ENCODE measurements at regions of chr17 and their contacts with region 1.

Region 1: GRCh38 chr17:47850692-47851573 is at the start of gene SP6:
- DNase-seq: peak; percentile 87
- H3K4me3 Mint-ChIP-seq: peak within 1 kb of the TSS; percentile 82
- H3K27ac Mint-ChIP-seq: peak within 1 kb of the TSS; percentile 78
- H3K4me1 Mint-ChIP-seq: peaks cover 15% of the 10 kb centered on the region
- H3K27me3 Mint-ChIP-seq: peaks cover 42% of the 10 kb centered on the region
- CTCF ChIP-seq: peak; percentile 15
- total RNA-seq, gene SP6: 1.2 and 1.5 TPM in 2 replicates

Region 2: GRCh38 chr17:47633996-47634395 is 216.9 kb before region 1 on chr17:
- CTCF ChIA-PET with region 1: no interaction called
- POLR2A ChIA-PET with region 1: no interaction called
- intact Hi-C with region 1: no loop called
- DNase-seq: no peak
- H3K4me3 Mint-ChIP-seq: no peak overlapping the region
- H3K27ac Mint-ChIP-seq: no peak overlapping the region
- H3K4me1 Mint-ChIP-seq: no peaks in the 10 kb centered on the region
- H3K27me3 Mint-ChIP-seq: no peaks in the 10 kb centered on the region
- CTCF ChIP-seq: no peak

Region 3: GRCh38 chr17:47831003-47831933 is 19.7 kb before region 1 on chr17 and contains the starts of genes LRRC46 and MRPL10:
- CTCF ChIA-PET with region 1: interaction called, 3 read pairs
- POLR2A ChIA-PET with region 1: interaction called, 12 read pairs
- intact Hi-C with region 1: no loop called
- DNase-seq: peak; percentile 90
- H3K4me3 Mint-ChIP-seq: peak within 1 kb of the TSS; percentile 83
- H3K27ac Mint-ChIP-seq: peak within 1 kb of the TSS; percentile 47
- H3K4me1 Mint-ChIP-seq: peaks cover 10% of the 10 kb centered on the region
- H3K27me3 Mint-ChIP-seq: no peaks in the 10 kb centered on the region
- CTCF ChIP-seq: peak; percentile 40
- total RNA-seq, gene LRRC46: 1.2 and 1.4 TPM in 2 replicates
- total RNA-seq, gene MRPL10: 43.2 and 49.3 TPM in 2 replicates

Region 4: DNA sequence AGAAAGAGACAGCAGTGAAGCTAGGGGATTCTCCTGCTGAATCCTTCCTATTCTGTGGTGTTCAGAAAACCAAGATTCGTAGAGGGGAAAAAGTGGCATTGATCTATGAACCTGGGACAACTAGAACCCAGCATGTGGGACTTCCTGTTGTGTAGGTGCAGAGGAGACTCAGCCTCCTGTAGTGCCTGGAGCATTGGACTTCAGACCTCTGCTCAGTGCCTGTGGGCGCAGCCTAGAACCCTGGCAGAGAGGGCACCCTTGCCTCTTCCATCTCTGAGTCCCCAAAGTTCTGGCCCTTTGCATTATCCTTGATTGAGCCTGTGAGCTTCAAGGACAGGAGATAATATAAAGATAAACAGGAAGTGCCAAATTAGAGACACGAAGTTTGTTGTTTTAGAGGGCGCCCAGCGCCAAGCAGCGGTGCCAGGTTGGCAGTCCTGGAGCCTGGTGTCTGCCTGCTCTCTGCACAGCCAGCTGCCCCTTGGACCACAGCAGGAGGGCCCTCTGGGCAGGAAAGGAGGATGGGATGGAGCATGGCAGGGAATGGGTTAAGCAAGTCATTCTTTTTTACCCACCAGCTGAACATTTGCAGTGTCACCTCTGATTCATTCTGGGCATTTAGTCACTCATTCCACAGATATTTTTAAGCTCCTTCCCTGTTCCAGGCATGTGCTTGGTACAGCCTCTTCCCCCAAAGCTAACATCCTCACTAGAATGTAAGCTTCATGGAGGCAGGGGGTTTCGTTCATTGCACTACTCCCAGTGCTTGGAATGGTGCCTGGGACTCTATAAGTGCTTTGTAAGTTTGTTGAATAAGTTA is 11.9 kb after region 1 on chr17:
- CTCF ChIA-PET with region 1: interaction called, 14 read pairs
- POLR2A ChIA-PET with region 1: interaction called, 19 read pairs
- intact Hi-C with region 1: no loop called
- DNase-seq: peak; percentile 53
- H3K4me3 Mint-ChIP-seq: no peak overlapping the region
- H3K27ac Mint-ChIP-seq: peak overlapping the region; percentile 4
- H3K4me1 Mint-ChIP-seq: peaks cover 21% of the 10 kb centered on the region
- H3K27me3 Mint-ChIP-seq: no peaks in the 10 kb centered on the region
- CTCF ChIP-seq: no peak

Region 5: GRCh38 chr17:47970704-47971463 is 120.0 kb after region 1 on chr17 and contains the start of gene CDK5RAP3:
- CTCF ChIA-PET with region 1: interaction called, 13 read pairs
- POLR2A ChIA-PET with region 1: interaction called, 3 read pairs
- intact Hi-C with region 1: no loop called
- DNase-seq: peak; percentile 99
- H3K4me3 Mint-ChIP-seq: peak within 1 kb of the TSS; percentile 94
- H3K27ac Mint-ChIP-seq: peak within 1 kb of the TSS; percentile 88
- H3K4me1 Mint-ChIP-seq: peaks cover 29% of the 10 kb centered on the region
- H3K27me3 Mint-ChIP-seq: no peaks in the 10 kb centered on the region
- CTCF ChIP-seq: peak; percentile 91
- total RNA-seq, gene CDK5RAP3: 132 and 149 TPM in 2 replicates